HEK293 (cell line): ENCODE measurements at regions of chr2 and their contacts with region 1.

Region 1: DNA sequence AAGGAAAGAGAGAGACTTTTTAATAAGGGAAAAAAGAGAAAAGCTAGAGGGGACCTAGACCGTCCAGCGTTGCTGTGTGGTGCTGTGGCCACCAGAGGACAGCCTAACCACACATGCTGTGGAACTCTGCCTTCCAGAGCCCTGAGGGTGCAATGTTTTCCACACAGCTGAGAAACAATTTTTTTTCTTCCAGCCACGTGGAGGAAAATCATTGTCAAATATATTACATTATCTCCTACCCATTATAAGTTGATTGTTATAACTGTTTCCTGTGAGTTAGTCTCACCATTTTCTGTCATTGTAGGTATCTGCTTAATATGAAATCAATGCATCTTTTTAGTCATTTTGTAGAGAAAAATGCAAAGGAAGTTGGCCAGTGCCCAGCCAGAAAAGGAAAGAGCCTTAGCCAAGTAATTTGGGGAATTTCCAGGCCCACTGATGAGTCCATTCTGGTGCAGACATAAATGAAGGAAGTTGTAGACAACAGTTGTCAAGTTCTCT is 5.9 kb upstream of the MRPL19 start:
- H3K4me3 ChIP-seq: no peak overlapping the region
- H3K27ac ChIP-seq: no peak overlapping the region
- H3K4me1 ChIP-seq: no peaks in the 10 kb centered on the region
- CTCF ChIP-seq: peak; percentile 75

Region 2: DNA sequence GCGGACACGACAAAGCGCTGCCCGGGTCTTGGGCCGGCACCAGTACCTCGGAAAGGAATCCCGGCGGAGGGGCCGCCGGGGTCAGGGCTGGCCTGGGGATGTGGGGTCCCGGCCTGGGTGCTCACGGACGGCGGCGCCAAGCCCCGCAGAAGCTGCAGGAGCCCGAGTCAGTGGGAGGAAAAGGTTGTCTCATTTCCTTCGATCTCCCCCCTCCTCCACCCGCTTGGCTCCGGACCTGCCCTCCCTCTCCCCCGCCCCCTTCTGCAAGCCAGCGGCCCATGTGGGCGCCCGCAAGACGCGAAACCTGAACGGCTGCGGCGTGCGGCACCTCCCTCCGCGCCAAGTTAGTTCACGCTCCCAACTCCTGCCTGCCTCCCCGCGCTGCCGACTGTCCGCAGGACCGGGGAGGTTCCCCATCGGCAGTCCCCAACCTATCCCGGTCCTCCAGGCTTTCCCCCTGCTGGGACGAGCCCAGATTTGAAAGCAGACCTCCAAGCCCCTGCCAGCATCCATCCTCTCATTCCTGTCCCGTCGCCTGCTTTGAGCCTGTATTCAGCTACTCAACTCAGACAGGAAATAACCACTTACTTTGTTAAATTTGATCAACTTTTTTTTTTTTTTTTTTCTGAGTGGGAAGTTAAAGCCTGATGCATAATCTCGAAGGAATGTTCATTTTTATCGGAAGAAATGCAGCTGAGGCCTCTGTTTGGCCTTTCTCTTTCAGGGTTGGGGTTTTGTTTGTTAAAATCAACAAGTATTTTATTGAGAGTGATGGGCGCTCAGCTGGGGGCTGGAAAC is 79.7 kb before region 1 on chr2 and contains the start of gene EVA1A:
- CTCF ChIA-PET with region 1: no interaction called
- POLR2A ChIA-PET with region 1: no interaction called
- H3K4me3 ChIP-seq: peak within 1 kb of the TSS; percentile 68
- H3K27ac ChIP-seq: peak within 1 kb of the TSS; percentile 37; the same call in 1 of the 2 replicates
- H3K4me1 ChIP-seq: no peaks in the 10 kb centered on the region; the same call in 1 of the 2 replicates
- CTCF ChIP-seq: no peak

Region 3: DNA sequence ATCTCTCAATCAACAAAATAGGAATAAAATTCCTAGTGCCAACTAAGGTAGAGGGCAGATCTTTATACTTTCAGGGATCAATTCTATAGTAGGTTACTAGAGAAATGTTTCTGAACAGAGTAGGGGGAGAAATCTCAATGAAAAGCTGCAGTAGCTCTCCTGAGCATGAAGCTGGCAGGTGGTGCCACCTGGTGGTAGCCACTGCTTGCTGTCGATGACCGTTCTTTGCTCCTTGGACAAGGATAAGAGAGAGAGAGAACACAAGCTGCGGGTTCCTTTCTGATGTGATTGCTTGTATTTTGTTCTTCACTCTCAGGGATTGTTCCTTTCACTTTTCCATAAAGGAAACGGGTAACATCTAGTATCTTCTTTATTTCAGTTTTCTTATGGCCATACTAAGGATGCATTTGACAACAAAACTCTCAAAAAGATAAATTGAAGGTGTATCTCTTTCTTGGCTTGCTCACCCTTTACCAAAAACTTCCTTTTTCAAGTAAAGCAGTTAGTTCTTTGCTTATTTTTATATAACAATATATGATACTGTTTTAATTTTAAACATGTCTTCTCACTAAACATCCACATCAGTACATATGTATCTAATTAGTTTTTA is 12.7 kb before region 1 on chr2:
- CTCF ChIA-PET with region 1: interaction called, 37 read pairs
- POLR2A ChIA-PET with region 1: no interaction called
- H3K4me3 ChIP-seq: no peak overlapping the region
- H3K27ac ChIP-seq: no peak overlapping the region
- H3K4me1 ChIP-seq: no peaks in the 10 kb centered on the region
- CTCF ChIP-seq: peak; percentile 61; the same call in 1 of the 2 replicates

Region 4: GRCh38 chr2:75654012-75654411 is 13.3 kb after region 1 on chr2:
- CTCF ChIA-PET with region 1: interaction called, 16 read pairs
- POLR2A ChIA-PET with region 1: no interaction called
- H3K4me3 ChIP-seq: no peak overlapping the region
- H3K27ac ChIP-seq: no peak overlapping the region
- H3K4me1 ChIP-seq: no peaks in the 10 kb centered on the region
- CTCF ChIP-seq: no peak